ENCODE measurements at regions of chr18 and their contacts with region 1.

Region 1: GRCh38 chr18:51668101-51668500 is 470.6 kb upstream of the MEX3C start:
- DNase-seq: peak; percentile 52
- CTCF ChIP-seq: peak; percentile 67

Region 2: GRCh38 chr18:51092117-51092516 is 576.0 kb before region 1 on chr18:
- in situ Hi-C with region 1: no loop called
- DNase-seq: no peak
- CTCF ChIP-seq: no peak

Region 3: GRCh38 chr18:52288403-52289004 is 620.4 kb after region 1 on chr18:
- in situ Hi-C with region 1: loop called (anchors 10 kb)
- DNase-seq: peak; percentile 7
- CTCF ChIP-seq: peak; percentile 94

Region 4: GRCh38 chr18:52694804-52695203 is 1026.7 kb after region 1 on chr18:
- in situ Hi-C with region 1: loop called (anchors 25 kb)
- DNase-seq: no peak
- CTCF ChIP-seq: peak; percentile 16

Measured in GM13976 (cell line).